ENCODE measurements at regions of chr12 and their contacts with region 1.

Region 1: GRCh38 chr12:10501031-10501430 is 4.7 kb upstream of the EIF2S3B start:
- DNase-seq: no peak
- ATAC-seq: no peak
- H3K4me3 ChIP-seq: no peak overlapping the region
- H3K27ac ChIP-seq: no peak overlapping the region
- H3K4me1 ChIP-seq: no peaks in the 10 kb centered on the region
- H3K27me3 ChIP-seq: peaks cover 6% of the 10 kb centered on the region
- CTCF ChIP-seq: peak; percentile 34
- POLR2A ChIP-seq: no peak
- RAD21 ChIP-seq: peak; percentile 35; the same call in 1 of the 2 replicates

Region 2: DNA sequence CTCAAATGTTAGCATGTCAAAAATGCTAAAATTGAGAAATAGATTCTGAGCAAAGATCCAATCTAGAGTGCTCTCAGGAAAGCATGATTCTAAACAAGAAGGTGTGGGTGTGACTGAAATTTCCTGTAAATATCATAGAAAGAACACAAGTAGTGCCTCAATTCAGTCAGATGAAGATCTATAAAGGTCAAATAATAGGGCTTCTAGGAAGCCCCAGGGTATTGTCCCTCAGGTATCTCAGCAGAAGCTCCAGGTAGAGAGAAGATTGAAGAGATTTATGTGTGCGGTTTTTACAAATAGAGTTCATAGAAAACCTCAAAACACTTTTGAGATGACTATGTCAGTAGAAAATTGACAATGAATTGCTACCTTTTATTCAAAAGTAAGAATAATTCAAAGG is 180.4 kb before region 1 on chr12:
- CTCF ChIA-PET with region 1: no interaction called
- POLR2A ChIA-PET with region 1: interaction called, 11 read pairs
- dilution Hi-C with region 1: no loop called
- in situ Hi-C with region 1: no loop called
- intact Hi-C with region 1: no loop called
- DNase-seq: no peak
- ATAC-seq: no peak
- H3K4me3 ChIP-seq: no peak overlapping the region
- H3K27ac ChIP-seq: no peak overlapping the region
- H3K4me1 ChIP-seq: no peaks in the 10 kb centered on the region
- H3K27me3 ChIP-seq: peaks cover 15% of the 10 kb centered on the region
- CTCF ChIP-seq: no peak
- POLR2A ChIP-seq: no peak
- RAD21 ChIP-seq: no peak

Region 3: GRCh38 chr12:10331642-10332239 is 169.3 kb before region 1 on chr12:
- CTCF ChIA-PET with region 1: no interaction called
- POLR2A ChIA-PET with region 1: no interaction called
- dilution Hi-C with region 1: no loop called
- in situ Hi-C with region 1: no loop called
- intact Hi-C with region 1: loop called (anchors 1 kb)
- DNase-seq: peak; percentile 62
- ATAC-seq: peak; percentile 94
- H3K4me3 ChIP-seq: no peak overlapping the region
- H3K27ac ChIP-seq: no peak overlapping the region
- H3K4me1 ChIP-seq: no peaks in the 10 kb centered on the region
- H3K27me3 ChIP-seq: peaks cover 4% of the 10 kb centered on the region
- CTCF ChIP-seq: peak; percentile 90
- POLR2A ChIP-seq: no peak
- RAD21 ChIP-seq: peak; percentile 87

Region 4: DNA sequence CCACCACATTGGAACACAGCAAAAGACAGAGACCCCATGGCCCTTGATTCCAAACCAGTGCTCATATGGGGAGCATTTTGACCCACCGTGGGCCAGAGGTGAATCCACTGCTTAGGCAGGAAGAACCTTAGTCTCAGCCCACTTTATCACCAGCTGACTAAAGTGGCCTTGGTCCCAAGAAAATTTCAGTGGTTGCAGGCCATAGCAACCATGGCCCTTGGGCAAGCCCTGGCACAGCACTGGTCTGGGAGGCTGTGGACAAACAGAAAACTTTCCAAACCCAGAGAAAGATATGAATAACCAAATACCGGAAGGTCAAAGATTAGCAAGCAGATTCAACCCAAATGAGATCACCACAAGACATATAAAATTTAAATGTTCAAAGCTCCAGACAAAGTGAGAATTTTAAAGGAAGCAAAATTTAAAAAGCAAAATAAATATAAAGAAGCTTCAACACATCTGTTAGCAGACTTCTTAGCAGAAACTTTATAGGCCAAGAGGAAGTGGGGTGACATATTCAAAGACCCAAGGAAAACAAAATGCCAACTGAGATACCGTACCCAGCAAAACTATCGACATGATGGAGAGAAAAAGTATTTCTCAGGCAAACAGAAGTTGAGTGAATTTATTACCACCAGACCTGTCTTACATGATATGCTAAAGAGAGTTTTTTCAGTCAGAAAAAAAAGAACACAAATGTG is 119.0 kb before region 1 on chr12:
- CTCF ChIA-PET with region 1: no interaction called
- POLR2A ChIA-PET with region 1: no interaction called
- dilution Hi-C with region 1: no loop called
- in situ Hi-C with region 1: no loop called
- intact Hi-C with region 1: no loop called
- DNase-seq: no peak
- ATAC-seq: no peak
- H3K4me3 ChIP-seq: no peak overlapping the region
- H3K27ac ChIP-seq: no peak overlapping the region
- H3K4me1 ChIP-seq: no peaks in the 10 kb centered on the region
- H3K27me3 ChIP-seq: no peaks in the 10 kb centered on the region
- CTCF ChIP-seq: no peak
- POLR2A ChIP-seq: no peak
- RAD21 ChIP-seq: no peak

Region 5: GRCh38 chr12:10849425-10849878 is 348.4 kb after region 1 on chr12 and contains the start of gene PRR4:
- CTCF ChIA-PET with region 1: no interaction called
- POLR2A ChIA-PET with region 1: no interaction called
- dilution Hi-C with region 1: no loop called
- in situ Hi-C with region 1: no loop called
- intact Hi-C with region 1: no loop called
- DNase-seq: no peak
- ATAC-seq: no peak
- H3K4me3 ChIP-seq: no peak within 1 kb of the TSS
- H3K27ac ChIP-seq: no peak within 1 kb of the TSS
- H3K4me1 ChIP-seq: no peaks in the 10 kb centered on the region
- H3K27me3 ChIP-seq: no peaks in the 10 kb centered on the region
- CTCF ChIP-seq: no peak
- POLR2A ChIP-seq: no peak
- RAD21 ChIP-seq: no peak
- total RNA-seq, gene PRR4: 0.72 and 0.83 TPM in 2 replicates